ENCODE measurements at regions of chr1 and their contacts with region 1.

Region 1: DNA sequence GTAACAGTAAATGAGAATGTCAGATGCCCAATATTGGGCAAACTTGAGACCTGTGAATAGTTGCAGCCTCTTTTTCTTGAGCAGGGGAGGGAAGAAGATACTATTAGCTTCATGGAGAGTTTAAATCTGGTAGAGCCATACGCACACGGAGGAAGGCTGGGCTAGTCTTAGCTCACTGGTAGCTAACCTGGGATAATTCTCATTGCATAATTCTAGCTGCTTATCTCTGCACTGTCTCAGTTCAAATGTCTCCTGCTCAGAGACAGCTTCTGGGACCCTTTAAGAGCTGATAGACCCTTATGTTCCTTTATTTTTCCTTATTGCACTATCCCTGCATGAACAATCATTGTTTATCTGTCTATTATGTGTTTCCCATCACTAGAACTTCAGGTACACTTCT is 8.4 kb downstream of the C1orf87 start:
- DNase-seq: no peak
- ATAC-seq: no peak
- H3K4me3 ChIP-seq: no peak overlapping the region
- H3K27ac ChIP-seq: no peak overlapping the region
- H3K4me1 ChIP-seq: no peaks in the 10 kb centered on the region
- H3K27me3 ChIP-seq: no peaks in the 10 kb centered on the region
- CTCF ChIP-seq: no peak
- EP300 ChIP-seq: no peak
- POLR2A ChIP-seq: no peak
- RAD21 ChIP-seq: no peak

Region 2: DNA sequence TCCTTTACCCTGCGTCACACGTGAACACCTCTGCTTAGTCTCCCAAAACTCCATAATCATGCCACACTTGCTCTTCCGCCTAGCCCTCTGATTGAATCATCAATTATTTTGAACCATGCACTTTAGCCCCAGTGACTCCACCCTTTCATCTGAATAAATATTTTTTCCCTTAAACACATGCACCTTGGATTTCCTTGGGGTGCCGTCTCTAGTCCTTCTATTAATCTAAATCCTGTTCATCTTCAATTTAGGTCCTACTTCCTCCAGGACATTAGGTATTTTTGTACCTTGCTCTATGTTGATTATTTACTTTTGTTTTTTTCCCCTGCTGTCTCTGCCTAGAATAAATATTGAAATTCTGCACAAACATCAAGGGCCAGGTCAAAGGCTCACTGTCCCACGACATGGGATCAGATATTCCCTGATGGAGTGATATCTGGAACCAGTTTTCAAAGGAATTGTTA is 128.8 kb before region 1 on chr1:
- CTCF ChIA-PET with region 1: no interaction called
- POLR2A ChIA-PET with region 1: no interaction called
- in situ Hi-C with region 1: no loop called
- intact Hi-C with region 1: no loop called
- DNase-seq: peak; percentile 79
- ATAC-seq: peak; percentile 95
- H3K4me3 ChIP-seq: peak overlapping the region in 1 of 3 experiments; percentile 34; a peak in 1 of 6 replicates
- H3K27ac ChIP-seq: peak overlapping the region; percentile 86
- H3K4me1 ChIP-seq: peaks cover 50% of the 10 kb centered on the region
- H3K27me3 ChIP-seq: no peaks in the 10 kb centered on the region; a peak in 1 of 5 replicates
- CTCF ChIP-seq: no peak
- EP300 ChIP-seq: peak in 1 of 2 experiments; percentile 90; a peak in 2 of 4 replicates
- POLR2A ChIP-seq: no peak
- RAD21 ChIP-seq: no peak

Region 3: GRCh38 chr1:60017508-60018205 is 47.5 kb before region 1 on chr1:
- CTCF ChIA-PET with region 1: no interaction called
- POLR2A ChIA-PET with region 1: no interaction called
- in situ Hi-C with region 1: no loop called
- intact Hi-C with region 1: loop called (anchors 1 kb)
- DNase-seq: no peak
- ATAC-seq: no peak
- H3K4me3 ChIP-seq: no peak overlapping the region
- H3K27ac ChIP-seq: no peak overlapping the region
- H3K4me1 ChIP-seq: no peaks in the 10 kb centered on the region
- H3K27me3 ChIP-seq: peaks cover 0 to 8% of the 10 kb centered on the region in 2 experiments; a peak in 1 of 5 replicates
- CTCF ChIP-seq: no peak
- EP300 ChIP-seq: no peak
- POLR2A ChIP-seq: no peak
- RAD21 ChIP-seq: no peak

Region 4: GRCh38 chr1:60088620-60089155 is 23.5 kb after region 1 on chr1:
- CTCF ChIA-PET with region 1: no interaction called
- POLR2A ChIA-PET with region 1: no interaction called
- in situ Hi-C with region 1: no loop called
- intact Hi-C with region 1: no loop called
- DNase-seq: no peak
- ATAC-seq: no peak
- H3K4me3 ChIP-seq: no peak overlapping the region
- H3K27ac ChIP-seq: no peak overlapping the region
- H3K4me1 ChIP-seq: no peaks in the 10 kb centered on the region
- H3K27me3 ChIP-seq: no peaks in the 10 kb centered on the region; a peak in 1 of 5 replicates
- CTCF ChIP-seq: no peak
- EP300 ChIP-seq: no peak
- POLR2A ChIP-seq: no peak
- RAD21 ChIP-seq: no peak

Region 5: DNA sequence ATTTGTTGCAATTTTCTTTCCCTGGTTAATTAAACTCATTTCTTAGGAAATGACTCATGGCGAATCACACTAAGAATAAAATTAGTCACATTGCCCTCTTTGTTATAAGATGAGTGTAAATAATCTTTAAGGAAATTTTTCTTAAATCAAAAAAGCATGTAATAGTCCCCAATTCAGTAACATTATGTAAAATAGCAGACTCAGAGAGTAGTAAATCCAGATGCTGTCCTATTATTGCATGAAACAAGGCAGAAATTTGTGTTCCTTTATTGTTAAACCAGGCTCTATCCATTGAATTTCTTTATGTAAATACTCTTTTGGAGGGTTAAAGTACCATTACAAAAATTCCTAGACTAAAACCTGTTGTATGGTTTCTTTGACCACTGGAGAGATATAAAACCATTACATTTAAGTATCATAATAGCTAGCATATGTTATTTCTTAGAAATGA is 162.9 kb after region 1 on chr1:
- CTCF ChIA-PET with region 1: no interaction called
- POLR2A ChIA-PET with region 1: no interaction called
- in situ Hi-C with region 1: no loop called
- intact Hi-C with region 1: no loop called
- DNase-seq: no peak
- ATAC-seq: no peak
- H3K4me3 ChIP-seq: no peak overlapping the region
- H3K27ac ChIP-seq: no peak overlapping the region
- H3K4me1 ChIP-seq: no peaks in the 10 kb centered on the region
- H3K27me3 ChIP-seq: no peaks in the 10 kb centered on the region
- CTCF ChIP-seq: no peak
- EP300 ChIP-seq: no peak
- POLR2A ChIP-seq: no peak
- RAD21 ChIP-seq: no peak